GM10248 (cell line): ENCODE measurements at regions of chr15 and their contacts with region 1.

Region 1: GRCh38 chr15:73265536-73266153 is 103.1 kb downstream of the HCN4 start:
- DNase-seq: peak; percentile 43
- CTCF ChIP-seq: peak; percentile 77

Region 2: GRCh38 chr15:73240866-73241499 is 24.7 kb before region 1 on chr15:
- CTCF ChIA-PET with region 1: interaction called, 140 read pairs
- POLR2A ChIA-PET with region 1: no interaction called
- DNase-seq: peak; percentile 45
- CTCF ChIP-seq: peak; percentile 84

Region 3: DNA sequence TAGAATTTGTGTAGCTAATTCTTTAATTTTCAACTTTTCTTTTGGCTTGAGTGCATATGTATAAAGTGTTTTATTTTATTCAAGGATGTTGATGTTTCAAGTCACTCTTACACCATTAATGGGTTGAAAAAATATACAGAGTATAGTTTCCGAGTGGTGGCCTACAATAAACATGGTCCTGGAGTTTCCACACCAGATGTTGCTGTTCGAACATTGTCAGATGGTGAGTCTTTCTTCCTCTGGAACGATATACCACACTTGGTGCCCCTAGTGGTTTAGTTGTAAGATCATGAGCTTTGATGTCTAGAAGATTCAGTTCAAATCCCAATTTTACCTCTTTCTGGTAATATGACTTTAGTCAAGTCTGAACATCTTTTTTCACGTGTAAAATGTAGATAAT is 16.1 kb before region 1 on chr15:
- CTCF ChIA-PET with region 1: interaction called, 140 read pairs
- POLR2A ChIA-PET with region 1: no interaction called
- DNase-seq: no peak
- CTCF ChIP-seq: no peak

Region 4: GRCh38 chr15:73284090-73284716 is 18.6 kb after region 1 on chr15:
- CTCF ChIA-PET with region 1: interaction called, 14 read pairs
- POLR2A ChIA-PET with region 1: no interaction called
- DNase-seq: no peak
- CTCF ChIP-seq: peak; percentile 23

Region 5: GRCh38 chr15:73357999-73358665 is 92.5 kb after region 1 on chr15:
- CTCF ChIA-PET with region 1: no interaction called
- POLR2A ChIA-PET with region 1: no interaction called
- DNase-seq: no peak
- CTCF ChIP-seq: no peak

Region 6: GRCh38 chr15:73388256-73388781 is 122.7 kb after region 1 on chr15:
- CTCF ChIA-PET with region 1: no interaction called
- POLR2A ChIA-PET with region 1: no interaction called
- DNase-seq: no peak
- CTCF ChIP-seq: no peak

Region 7: DNA sequence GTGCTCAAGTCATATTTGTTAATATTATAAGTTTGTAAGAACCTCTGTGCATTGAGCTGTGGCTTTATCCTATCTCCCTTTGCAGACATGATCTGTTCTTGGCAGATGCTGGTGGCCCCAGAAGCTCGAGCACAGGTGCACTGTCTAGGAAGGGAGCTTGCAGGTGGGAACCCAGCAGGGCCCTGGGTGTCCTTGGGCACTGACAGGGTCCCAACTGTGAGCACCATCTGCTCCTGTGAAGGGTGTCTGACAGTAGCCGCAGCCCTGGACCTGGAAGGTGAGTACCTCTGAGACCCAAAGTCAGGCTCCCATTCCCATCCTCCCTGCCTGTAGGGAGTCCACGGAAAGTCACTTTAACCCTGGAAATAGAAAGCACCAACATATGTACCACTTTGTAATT is 174.9 kb after region 1 on chr15:
- CTCF ChIA-PET with region 1: no interaction called
- POLR2A ChIA-PET with region 1: no interaction called
- DNase-seq: no peak
- CTCF ChIP-seq: no peak